Sciatic nerve (tissue), 2 donors: ENCODE measurements at regions of chr16 and their contacts with region 1.

Region 1: DNA sequence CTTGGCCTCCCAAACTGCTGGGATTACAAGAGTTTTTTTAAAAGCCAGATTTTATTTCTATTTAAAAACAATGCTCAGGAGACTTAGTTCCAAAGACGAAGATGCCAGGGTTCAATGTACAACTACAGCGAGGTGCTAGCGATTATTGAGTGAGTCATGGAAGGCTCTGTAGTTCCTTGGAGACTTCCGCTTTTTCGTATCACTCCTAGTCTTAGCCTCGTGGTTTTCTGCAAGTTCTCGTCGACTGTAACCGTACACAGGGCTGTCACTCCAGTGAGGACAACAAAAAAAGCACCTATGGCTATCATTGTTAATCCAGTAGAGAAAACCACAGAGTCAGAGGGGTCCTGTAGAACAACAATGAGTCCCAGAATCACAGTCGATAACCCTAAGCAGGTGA is 22.7 kb upstream of the ZC3H7A start:
- DNase-seq: no peak
- ATAC-seq: no peak

Region 2: DNA sequence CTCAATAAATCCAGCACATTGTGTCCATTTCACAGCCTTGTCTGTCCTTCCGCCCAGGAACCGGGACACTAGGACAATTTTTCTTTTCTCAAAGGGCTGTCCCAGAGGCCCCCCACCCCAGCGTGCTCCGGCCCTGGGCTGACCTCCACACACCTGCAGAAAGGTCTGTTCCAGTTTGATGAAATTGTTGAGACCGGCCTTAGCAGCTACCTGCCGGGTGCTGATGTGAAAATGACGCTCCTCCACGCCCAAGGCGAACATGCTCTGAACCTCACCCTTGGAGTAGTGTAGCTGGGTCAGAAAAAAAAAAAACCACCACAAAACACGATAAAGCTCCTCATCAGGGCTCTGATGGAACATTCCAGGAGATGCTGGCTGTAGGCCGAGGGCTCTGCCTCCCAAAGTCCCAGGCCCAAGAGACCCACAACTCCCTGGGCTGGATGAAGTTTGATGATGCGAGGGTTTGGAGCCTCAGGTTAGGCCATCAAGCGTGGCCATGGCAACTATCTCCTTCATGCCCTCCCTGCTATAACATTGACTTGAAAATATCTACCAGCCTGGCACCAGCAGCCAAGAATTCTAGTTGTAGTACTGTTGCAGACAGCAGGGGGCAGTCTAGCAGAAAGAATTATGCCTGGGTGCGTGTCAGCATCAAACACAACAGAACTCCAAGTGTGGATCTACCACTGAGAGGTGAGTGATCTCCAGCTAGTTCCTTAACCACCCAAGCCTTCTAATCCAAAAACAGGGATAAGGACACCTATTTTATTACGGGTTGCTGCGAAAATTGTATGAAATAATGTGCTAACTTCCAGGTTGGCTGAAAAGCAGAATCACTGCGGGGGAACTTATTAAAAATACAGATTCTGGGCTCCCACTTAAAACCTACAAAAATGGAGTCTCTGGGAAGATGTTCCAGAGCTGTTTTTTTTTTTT is 412.5 kb before region 1 on chr16:
- intact Hi-C with region 1: loop called (anchors 10 kb)
- DNase-seq: peak; percentile 78
- ATAC-seq: peak; percentile 77

Region 3: GRCh38 chr16:11757671-11758545 is 61.9 kb before region 1 on chr16:
- intact Hi-C with region 1: no loop called
- DNase-seq: no peak
- ATAC-seq: peak; percentile 36

Region 4: DNA sequence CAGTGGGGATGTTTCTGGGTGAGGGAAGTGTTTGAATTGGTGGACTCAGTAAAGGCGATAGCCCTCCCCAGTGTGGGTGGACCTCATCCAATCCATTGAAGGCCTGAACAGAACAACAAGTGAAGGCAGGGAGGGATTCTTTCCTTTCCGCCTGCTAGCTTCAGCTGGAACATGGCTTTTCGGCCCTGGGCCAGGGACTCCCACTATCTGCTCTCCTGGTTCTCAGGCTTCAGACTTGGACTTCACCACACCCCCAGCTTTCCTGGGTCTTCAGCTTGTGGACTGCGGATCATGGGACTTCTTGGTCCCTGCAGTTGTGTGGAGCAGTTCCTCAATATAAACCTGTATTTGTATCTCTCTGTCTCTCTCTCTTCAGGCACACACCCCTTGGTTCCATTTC is 234.6 kb after region 1 on chr16:
- intact Hi-C with region 1: no loop called
- DNase-seq: no peak
- ATAC-seq: no peak